ENCODE measurements at regions of chr3 and their contacts with region 1.

Region 1: GRCh38 chr3:171248425-171249111 is 211.6 kb downstream of the TNIK start:
- DNase-seq: no peak
- H3K4me3 Mint-ChIP-seq: no peak overlapping the region
- H3K27ac Mint-ChIP-seq: no peak overlapping the region
- H3K4me1 Mint-ChIP-seq: peaks cover 45% of the 10 kb centered on the region
- H3K27me3 Mint-ChIP-seq: no peaks in the 10 kb centered on the region

Region 2: GRCh38 chr3:171187706-171188290 is 60.8 kb before region 1 on chr3:
- CTCF ChIA-PET with region 1: interaction called, 6 read pairs
- intact Hi-C with region 1: loop called (anchors 1 kb)
- DNase-seq: peak; percentile 35
- H3K4me3 Mint-ChIP-seq: no peak overlapping the region
- H3K27ac Mint-ChIP-seq: no peak overlapping the region
- H3K4me1 Mint-ChIP-seq: peaks cover 49% of the 10 kb centered on the region
- H3K27me3 Mint-ChIP-seq: no peaks in the 10 kb centered on the region

Region 3: DNA sequence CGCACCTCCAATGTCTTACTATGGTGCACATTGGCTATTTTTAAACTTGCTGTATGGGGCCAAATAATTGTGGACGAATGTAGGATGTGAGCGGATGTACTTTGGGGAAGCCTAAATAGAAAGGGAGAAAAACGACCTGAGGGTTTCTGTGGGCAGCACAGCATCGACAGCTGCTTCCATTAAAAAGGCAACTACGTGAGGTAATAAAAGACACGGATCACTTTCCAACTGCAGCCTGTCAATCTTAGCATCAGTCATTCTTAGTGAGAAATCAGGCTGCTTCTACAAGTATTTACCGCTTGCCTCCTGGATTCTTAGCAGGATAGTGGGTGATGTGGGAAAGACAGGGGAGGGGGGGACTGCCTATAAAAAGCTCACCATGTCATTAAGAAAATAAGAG is 35.4 kb before region 1 on chr3:
- CTCF ChIA-PET with region 1: no interaction called
- intact Hi-C with region 1: no loop called
- DNase-seq: no peak
- H3K4me3 Mint-ChIP-seq: no peak overlapping the region
- H3K27ac Mint-ChIP-seq: no peak overlapping the region
- H3K4me1 Mint-ChIP-seq: peaks cover 16% of the 10 kb centered on the region
- H3K27me3 Mint-ChIP-seq: no peaks in the 10 kb centered on the region

Region 4: DNA sequence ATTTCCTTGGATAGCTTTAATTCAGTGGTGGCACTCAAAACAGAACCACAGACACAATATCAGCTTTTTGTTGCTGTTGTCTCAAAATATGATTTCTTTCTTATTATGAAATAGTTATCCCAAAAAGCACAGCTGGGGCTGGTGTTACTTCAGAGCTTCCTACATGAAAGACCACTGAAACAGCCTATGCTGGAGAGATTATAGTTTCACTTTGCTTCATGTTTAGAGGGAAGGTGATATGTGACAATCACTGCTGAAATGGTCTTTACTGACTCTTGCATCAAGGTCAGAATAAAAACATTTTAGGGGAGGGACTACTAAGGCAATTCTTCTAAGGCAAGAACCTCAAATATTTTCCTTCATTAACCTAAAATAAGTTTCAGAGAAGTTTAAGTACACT is 21.0 kb after region 1 on chr3:
- CTCF ChIA-PET with region 1: interaction called, 3 read pairs
- intact Hi-C with region 1: loop called (anchors 1 kb)
- DNase-seq: no peak
- H3K4me3 Mint-ChIP-seq: peak overlapping the region; percentile 25
- H3K27ac Mint-ChIP-seq: peak overlapping the region; percentile 50
- H3K4me1 Mint-ChIP-seq: peaks cover 84% of the 10 kb centered on the region
- H3K27me3 Mint-ChIP-seq: no peaks in the 10 kb centered on the region

Region 5: GRCh38 chr3:171480526-171480925 is 232.0 kb after region 1 on chr3:
- CTCF ChIA-PET with region 1: no interaction called
- intact Hi-C with region 1: no loop called
- DNase-seq: peak; percentile 22
- H3K4me3 Mint-ChIP-seq: no peak overlapping the region
- H3K27ac Mint-ChIP-seq: peak overlapping the region; percentile 80
- H3K4me1 Mint-ChIP-seq: peaks cover 16% of the 10 kb centered on the region
- H3K27me3 Mint-ChIP-seq: no peaks in the 10 kb centered on the region

Region 6: DNA sequence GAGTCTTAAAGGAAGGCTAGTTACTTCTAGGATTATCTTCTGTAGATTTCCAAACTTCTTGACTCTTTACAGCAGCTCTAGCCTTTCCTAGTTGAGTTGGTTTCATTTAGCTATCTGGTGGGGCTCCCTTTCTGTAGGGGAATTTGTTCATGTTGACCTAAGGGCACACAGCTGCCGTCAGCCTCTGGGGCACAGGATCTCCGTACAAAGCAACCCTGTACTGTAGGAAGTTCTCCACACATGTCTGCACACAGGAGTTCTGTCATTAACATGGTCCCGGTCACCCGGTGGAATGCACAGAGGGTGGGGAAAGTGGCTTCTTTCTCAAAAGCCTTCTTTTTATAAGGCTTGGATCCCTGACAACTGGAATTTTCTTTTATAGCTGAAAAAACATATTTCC is 300.3 kb after region 1 on chr3:
- CTCF ChIA-PET with region 1: no interaction called
- intact Hi-C with region 1: no loop called
- DNase-seq: no peak
- H3K4me3 Mint-ChIP-seq: no peak overlapping the region
- H3K27ac Mint-ChIP-seq: no peak overlapping the region
- H3K4me1 Mint-ChIP-seq: peaks cover 2% of the 10 kb centered on the region
- H3K27me3 Mint-ChIP-seq: no peaks in the 10 kb centered on the region

Region 7: GRCh38 chr3:171561596-171562323 is 313.2 kb after region 1 on chr3:
- CTCF ChIA-PET with region 1: interaction called, 7 read pairs
- intact Hi-C with region 1: loop called (anchors 2 kb)
- DNase-seq: no peak
- H3K4me3 Mint-ChIP-seq: peak overlapping the region; percentile 40
- H3K27ac Mint-ChIP-seq: peak overlapping the region; percentile 88
- H3K4me1 Mint-ChIP-seq: peaks cover 22% of the 10 kb centered on the region
- H3K27me3 Mint-ChIP-seq: no peaks in the 10 kb centered on the region

Region 8: GRCh38 chr3:171874251-171874679 is 625.7 kb after region 1 on chr3:
- CTCF ChIA-PET with region 1: no interaction called
- intact Hi-C with region 1: no loop called
- DNase-seq: no peak
- H3K4me3 Mint-ChIP-seq: no peak overlapping the region
- H3K27ac Mint-ChIP-seq: no peak overlapping the region
- H3K4me1 Mint-ChIP-seq: peaks cover 4% of the 10 kb centered on the region
- H3K27me3 Mint-ChIP-seq: peaks cover 8% of the 10 kb centered on the region

Region 9: DNA sequence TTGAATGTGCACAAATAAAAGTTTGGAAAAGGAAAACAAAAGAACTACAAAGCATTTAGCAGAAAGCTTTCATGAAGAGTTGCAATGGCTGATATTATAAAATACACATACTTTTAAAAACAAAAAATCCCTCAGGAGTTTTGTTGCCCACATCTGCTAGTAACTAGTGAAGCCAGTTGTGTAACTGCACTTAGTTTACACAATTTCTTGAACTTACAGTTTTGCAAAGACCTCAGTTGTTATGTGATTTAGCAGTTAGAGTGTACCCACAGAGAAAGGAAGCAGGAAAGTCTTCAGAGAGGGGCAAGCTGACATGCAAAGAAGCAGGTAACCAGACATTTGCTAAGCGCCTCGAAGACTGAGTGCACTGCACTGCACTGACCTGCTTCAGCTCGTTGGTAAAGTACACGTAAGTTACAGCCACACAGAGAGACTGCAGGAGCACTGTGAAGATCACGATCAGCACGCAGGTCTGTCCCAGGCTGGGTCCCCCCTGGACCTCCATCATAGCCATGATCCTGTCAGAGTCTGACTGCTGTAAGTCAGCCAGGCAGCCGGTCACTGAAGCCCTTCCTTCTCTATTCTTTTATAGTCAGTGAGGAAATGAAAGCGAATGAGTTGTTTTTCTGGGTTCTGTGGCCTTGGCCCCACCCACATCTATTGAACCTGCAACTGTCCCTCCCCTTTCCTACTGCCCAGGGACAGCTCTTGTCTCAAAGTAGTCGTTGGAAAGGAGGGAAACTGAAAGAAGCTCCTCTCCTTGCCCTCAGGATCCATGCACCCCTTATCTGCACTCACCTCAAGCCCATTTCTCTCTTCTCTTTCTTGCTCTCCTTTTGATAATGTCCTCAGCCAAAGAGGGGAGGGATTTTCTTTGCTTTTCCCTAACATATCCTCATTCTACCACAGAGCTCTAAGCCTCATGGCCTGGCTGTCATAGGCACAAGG is 1274.6 kb after region 1 on chr3 and contains the start of gene TNFSF10:
- CTCF ChIA-PET with region 1: no interaction called
- intact Hi-C with region 1: loop called (anchors 5 kb)
- DNase-seq: peak; percentile 78
- H3K4me3 Mint-ChIP-seq: peak within 1 kb of the TSS; percentile 96
- H3K27ac Mint-ChIP-seq: peak within 1 kb of the TSS; percentile 96
- H3K4me1 Mint-ChIP-seq: peaks cover 42% of the 10 kb centered on the region
- H3K27me3 Mint-ChIP-seq: no peaks in the 10 kb centered on the region
- total RNA-seq, gene TNFSF10: 31.8 to 32.7 TPM

Measured in activated naive CD4-positive, alpha-beta T cell treated with anti-CD3 and anti-CD28 coated beads for 36 hours (primary cell).